Heart right ventricle (tissue), 16 donors: ENCODE measurements at regions of chr7 and their contacts with region 1.

Region 1: GRCh38 chr7:107201795-107202450 is 33.1 kb downstream of the HBP1 start:
- DNase-seq: peak; percentile 50 to 51
- ATAC-seq: peak; percentile 79 to 94 (median 86)
- H3K4me3 ChIP-seq: no peak overlapping the region
- H3K27ac ChIP-seq: peak overlapping the region in 6 of 10 donors; percentile 18 to 56 (median 46)
- H3K4me1 ChIP-seq: peaks cover 0 to 15% (median 2%) of the 10 kb centered on the region in 9 donors
- H3K27me3 ChIP-seq: no peaks in the 10 kb centered on the region
- CTCF ChIP-seq: peak in 8 of 9 donors; percentile 29 to 73 (median 62)

Region 2: DNA sequence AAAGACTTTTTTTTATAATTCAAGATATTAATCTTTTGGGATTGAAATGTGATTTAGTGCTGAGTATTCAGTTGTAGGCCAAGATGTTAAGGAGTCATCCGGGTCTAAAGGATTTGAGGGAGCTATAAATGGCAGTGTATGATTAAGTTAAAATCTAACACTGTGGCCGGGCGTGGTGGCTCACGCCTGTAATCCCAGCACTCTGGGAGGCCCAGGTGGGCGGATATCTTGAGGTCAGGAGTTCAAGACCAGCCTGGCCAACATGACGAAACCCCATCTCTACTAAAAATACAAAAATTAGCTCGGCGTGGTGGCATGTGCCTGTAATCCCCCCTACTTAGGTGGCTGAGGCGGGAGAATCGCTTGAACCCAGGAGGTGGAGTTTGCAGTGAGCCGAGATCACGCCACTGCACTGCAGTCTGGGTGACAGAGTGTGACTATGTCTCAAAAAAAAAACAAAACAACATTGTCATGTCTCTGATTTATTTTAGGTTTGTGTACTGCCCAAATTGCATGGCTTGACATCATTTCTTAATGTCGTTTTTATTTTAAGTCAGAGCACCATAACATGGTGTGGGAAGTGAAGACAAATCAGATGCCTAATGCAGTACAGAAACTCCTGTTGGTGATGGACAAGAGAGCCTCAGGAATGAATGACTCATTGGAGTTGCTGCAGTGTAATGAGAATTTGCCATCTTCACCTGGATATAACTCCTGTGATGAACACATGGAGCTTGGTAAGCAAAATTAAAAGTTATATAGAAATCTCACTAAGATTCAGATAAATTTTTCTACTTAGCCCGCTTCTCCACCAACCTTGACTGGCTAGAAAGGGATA is 22.4 kb before region 1 on chr7:
- intact Hi-C with region 1: loop called in 1 of 10 experiments (anchors 2 kb)
- DNase-seq: no peak
- ATAC-seq: peak in 1 of 8 donors; percentile 39
- H3K4me3 ChIP-seq: no peak overlapping the region
- H3K27ac ChIP-seq: peak overlapping the region in 2 of 10 donors; percentile 15 to 24
- H3K4me1 ChIP-seq: peaks cover 0 to 85% (median 53%) of the 10 kb centered on the region in 9 donors
- H3K27me3 ChIP-seq: no peaks in the 10 kb centered on the region
- CTCF ChIP-seq: no peak

Region 3: GRCh38 chr7:107286751-107287621 is 85.1 kb after region 1 on chr7:
- intact Hi-C with region 1: no loop called
- DNase-seq: peak in 1 of 2 donors; percentile 42
- ATAC-seq: peak; percentile 52 to 85 (median 68)
- H3K4me3 ChIP-seq: no peak overlapping the region
- H3K27ac ChIP-seq: peak overlapping the region; percentile 48 to 83 (median 70)
- H3K4me1 ChIP-seq: peaks cover 0 to 24% (median 14%) of the 10 kb centered on the region in 9 donors
- H3K27me3 ChIP-seq: no peaks in the 10 kb centered on the region
- CTCF ChIP-seq: no peak

Region 4: GRCh38 chr7:107450970-107451369 is 249.0 kb after region 1 on chr7:
- intact Hi-C with region 1: loop called in 1 of 10 experiments (anchors 10 kb)
- DNase-seq: no peak
- ATAC-seq: no peak
- H3K4me3 ChIP-seq: no peak overlapping the region
- H3K27ac ChIP-seq: no peak overlapping the region
- H3K4me1 ChIP-seq: peaks cover 0 to 12% (median 0%) of the 10 kb centered on the region in 9 donors
- H3K27me3 ChIP-seq: no peaks in the 10 kb centered on the region
- CTCF ChIP-seq: no peak

Region 5: DNA sequence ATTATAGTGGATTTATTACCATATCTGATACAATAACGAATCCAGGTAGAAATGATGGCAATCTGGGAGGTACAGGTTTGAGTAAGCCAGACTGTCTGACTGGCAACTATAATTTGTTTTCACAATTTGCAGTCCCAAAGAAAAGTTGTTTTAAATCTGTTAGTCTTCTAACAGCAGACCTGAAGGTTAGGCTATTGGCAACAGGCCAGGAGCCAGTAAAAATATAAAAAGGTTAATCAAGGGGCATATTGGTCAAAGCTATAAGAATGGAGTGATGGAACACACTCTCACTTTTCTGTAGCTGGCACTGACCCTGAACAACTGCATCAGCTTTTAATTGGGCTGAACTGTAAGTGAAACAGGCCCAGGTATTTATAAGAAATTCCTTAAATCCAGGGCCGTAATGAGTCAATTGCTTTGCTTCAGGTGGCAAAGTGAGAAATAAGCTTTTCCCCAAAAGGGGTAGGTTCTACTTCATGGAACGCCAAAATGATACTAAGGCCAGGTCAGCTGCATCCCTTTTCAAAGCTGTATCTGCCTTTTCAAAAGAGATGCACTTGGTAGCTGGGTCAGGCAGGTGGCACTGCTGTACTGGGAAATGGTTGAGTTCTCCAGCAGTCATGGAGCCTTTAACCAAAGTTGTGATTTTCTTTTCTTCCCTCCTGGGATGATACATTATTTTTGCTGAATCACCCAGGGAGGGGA is 261.0 kb after region 1 on chr7:
- intact Hi-C with region 1: loop called in 7 of 10 experiments (anchors 5 to 10 kb)
- DNase-seq: peak; percentile 46 to 61
- ATAC-seq: peak; percentile 75 to 96 (median 90)
- H3K4me3 ChIP-seq: no peak overlapping the region
- H3K27ac ChIP-seq: peak overlapping the region in 7 of 10 donors; percentile 8 to 65 (median 51)
- H3K4me1 ChIP-seq: peaks cover 0 to 39% (median 5%) of the 10 kb centered on the region in 9 donors
- H3K27me3 ChIP-seq: no peaks in the 10 kb centered on the region
- CTCF ChIP-seq: peak; percentile 54 to 91 (median 73)

Region 6: DNA sequence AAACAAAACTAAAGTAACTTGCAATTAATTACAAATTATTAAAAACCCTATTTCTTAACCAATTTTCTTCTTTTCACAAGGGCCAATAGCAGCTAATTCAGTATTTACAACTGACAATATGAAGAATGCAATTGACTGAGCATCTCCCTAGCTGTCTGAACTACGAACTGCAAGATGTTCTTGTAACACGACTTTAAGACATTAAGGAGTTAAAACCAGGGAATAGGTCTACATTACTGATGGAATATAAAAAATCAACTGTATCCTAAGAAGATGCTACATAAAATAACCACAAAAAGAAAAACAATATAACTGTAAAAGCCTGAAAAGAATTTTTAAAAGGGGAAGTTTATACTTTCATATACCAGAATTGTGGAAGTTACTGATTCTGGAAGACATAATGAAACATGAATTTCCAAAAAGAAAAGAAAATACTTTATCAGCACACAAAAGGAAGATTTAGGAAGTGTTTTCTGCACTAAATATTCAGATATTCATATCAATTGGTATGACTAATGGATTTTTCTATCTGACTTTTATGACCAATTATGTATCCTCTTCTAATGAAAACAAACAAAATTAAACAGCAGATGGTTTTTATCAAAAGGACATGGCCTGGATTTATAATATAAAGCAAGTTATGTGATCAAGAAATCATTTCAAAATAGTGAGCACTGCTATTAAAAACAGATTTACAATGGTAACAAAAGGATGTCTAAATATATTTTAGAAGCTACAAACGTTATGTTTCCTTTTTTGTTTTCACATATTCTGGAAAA is 269.6 kb after region 1 on chr7:
- intact Hi-C with region 1: loop called in 6 of 10 experiments (anchors 5 to 10 kb)
- DNase-seq: no peak
- ATAC-seq: peak in 3 of 8 donors; percentile 58 to 70 (median 62)
- H3K4me3 ChIP-seq: peak overlapping the region; percentile 5 to 49 (median 34)
- H3K27ac ChIP-seq: peak overlapping the region; percentile 46 to 86 (median 78)
- H3K4me1 ChIP-seq: peaks cover 0 to 17% (median 0%) of the 10 kb centered on the region in 9 donors
- H3K27me3 ChIP-seq: no peaks in the 10 kb centered on the region
- CTCF ChIP-seq: peak in 3 of 9 donors; percentile 33 to 40 (median 37)

Region 7: DNA sequence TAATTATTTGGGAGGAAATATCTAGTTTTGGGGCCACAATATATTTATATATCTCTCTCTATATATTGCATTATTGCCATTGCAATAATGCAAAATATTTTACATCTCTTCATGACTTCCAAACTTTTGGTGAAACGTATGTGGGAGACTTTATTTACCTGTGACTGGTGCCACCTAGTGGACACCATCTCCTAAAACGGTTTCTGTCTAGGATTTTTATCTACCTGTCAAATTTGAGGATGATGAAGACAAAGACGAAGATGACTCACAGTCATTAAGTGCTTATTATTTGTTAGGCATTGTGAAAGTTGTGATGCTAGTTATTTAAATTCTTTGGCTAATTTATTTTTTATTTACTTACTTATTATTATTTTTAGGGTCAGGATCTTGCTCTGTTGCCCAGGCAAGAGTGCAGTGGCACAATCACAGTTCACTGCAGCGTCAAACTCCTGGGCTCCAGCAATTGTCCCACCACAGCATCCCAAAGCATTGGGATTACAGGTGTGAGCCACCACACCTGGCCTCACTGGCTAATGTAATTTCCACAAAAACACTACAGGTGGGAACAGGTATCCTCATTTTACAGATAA is 523.3 kb after region 1 on chr7:
- intact Hi-C with region 1: loop called in 7 of 10 experiments (anchors 5 to 10 kb)
- DNase-seq: peak in 1 of 2 donors; percentile 42
- ATAC-seq: no peak
- H3K4me3 ChIP-seq: no peak overlapping the region
- H3K27ac ChIP-seq: no peak overlapping the region
- H3K4me1 ChIP-seq: no peaks in the 10 kb centered on the region
- H3K27me3 ChIP-seq: peaks cover 0 to 9% (median 0%) of the 10 kb centered on the region in 7 donors
- CTCF ChIP-seq: peak; percentile 57 to 83 (median 74)

Region 8: GRCh38 chr7:107879400-107880035 is 677.6 kb after region 1 on chr7:
- intact Hi-C with region 1: loop called in 2 of 10 experiments (anchors 10 kb)
- DNase-seq: no peak
- ATAC-seq: peak; percentile 62 to 79 (median 69)
- H3K4me3 ChIP-seq: no peak overlapping the region
- H3K27ac ChIP-seq: no peak overlapping the region
- H3K4me1 ChIP-seq: peaks cover 0 to 17% (median 0%) of the 10 kb centered on the region in 9 donors
- H3K27me3 ChIP-seq: peaks cover 0 to 4% (median 0%) of the 10 kb centered on the region in 7 donors
- CTCF ChIP-seq: peak; percentile 33 to 83 (median 72)